Ovary (tissue), 10 donors: ENCODE measurements at regions of chr2 and their contacts with region 1.

Region 1: DNA sequence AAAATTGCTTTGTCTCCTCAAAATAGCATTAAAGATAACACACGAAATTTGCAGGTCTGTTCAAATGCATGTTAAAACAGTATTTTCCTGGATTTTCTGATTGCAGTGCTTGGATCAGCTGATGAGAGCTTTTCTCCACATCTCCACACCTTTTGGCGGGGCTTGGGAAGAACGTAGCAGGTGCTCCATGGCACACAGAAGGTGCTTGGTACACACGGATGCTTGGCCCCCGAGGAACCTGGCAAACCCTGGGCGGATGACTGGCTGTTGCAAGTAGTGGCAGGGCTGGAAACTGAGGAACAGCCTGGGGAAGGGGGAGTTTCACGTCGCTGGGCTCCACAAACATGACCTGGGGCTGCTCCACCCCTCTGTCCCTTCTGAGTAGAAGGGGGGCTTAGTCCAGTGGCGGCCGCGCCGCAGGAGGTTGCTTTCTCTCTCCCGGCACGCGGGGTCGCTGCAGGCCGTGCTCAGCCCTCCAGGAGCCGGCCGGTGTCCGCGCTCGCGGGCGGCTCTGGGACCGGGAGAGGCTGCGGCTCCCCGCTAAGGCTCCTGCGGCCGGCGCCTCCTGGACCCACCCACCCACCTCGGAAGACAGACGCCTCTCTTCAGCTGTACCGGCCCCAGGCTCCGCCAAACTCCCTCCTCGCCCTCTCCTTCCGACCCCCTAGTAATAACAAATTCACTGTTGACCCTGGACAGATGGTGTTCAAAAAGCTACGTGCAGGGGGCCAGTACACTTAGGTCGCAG is 69.3 kb downstream of the MARCO start:
- DNase-seq: peak in 4 of 5 donors; percentile 46 to 73 (median 58)
- H3K4me3 ChIP-seq: no peak overlapping the region
- H3K27ac ChIP-seq: no peak overlapping the region
- H3K4me1 ChIP-seq: no peaks in the 10 kb centered on the region
- H3K27me3 ChIP-seq: no peaks in the 10 kb centered on the region
- CTCF ChIP-seq: peak; percentile 20 to 64 (median 54)
- EP300 ChIP-seq: no peak
- POLR2A ChIP-seq: no peak

Region 2: GRCh38 chr2:119136093-119136492 is 124.8 kb after region 1 on chr2:
- intact Hi-C with region 1: no loop called
- DNase-seq: no peak
- H3K4me3 ChIP-seq: no peak overlapping the region
- H3K27ac ChIP-seq: no peak overlapping the region
- H3K4me1 ChIP-seq: no peaks in the 10 kb centered on the region
- H3K27me3 ChIP-seq: no peaks in the 10 kb centered on the region
- CTCF ChIP-seq: no peak
- EP300 ChIP-seq: no peak
- POLR2A ChIP-seq: no peak

Region 3: DNA sequence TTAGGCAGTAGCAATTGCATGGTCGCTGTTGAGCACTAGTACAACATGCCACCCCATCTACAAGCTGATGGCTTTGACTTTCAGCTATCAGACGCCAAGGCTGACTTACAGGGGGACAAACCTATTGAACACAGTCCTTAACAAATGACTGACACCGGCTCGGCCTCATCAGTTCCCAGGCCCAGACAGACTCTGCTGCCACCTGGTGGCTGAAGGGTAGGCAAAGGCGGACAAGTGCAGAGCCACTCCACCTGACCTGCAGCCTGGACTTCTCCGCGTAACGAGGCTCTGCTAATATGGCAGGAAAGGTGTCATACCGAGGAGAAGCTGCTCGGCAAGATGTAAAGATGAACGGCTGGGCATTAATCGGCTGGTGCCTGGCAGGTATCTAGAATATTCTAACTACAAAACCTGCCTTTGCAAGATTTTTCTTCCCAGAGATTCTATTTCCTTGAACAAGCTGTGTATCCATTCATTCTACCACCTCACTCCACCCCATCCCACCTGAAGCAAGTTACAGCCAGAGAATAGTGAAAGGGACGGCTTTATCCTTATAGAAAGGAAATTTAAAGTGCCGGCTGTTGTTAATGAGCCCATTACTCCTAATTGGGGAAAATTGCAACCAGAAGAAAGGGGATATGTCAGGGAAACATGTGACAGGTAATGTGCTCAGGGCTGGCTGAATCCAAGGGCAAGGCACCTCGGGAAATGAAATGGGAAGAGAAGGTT is 279.7 kb after region 1 on chr2:
- intact Hi-C with region 1: loop called in 2 of 4 experiments (anchors 2 to 5 kb)
- DNase-seq: peak in 4 of 5 donors; percentile 76 to 83 (median 79)
- H3K4me3 ChIP-seq: no peak overlapping the region
- H3K27ac ChIP-seq: no peak overlapping the region
- H3K4me1 ChIP-seq: no peaks in the 10 kb centered on the region
- H3K27me3 ChIP-seq: no peaks in the 10 kb centered on the region
- CTCF ChIP-seq: peak; percentile 44 to 68 (median 64)
- EP300 ChIP-seq: no peak
- POLR2A ChIP-seq: no peak

Region 4: GRCh38 chr2:119476301-119477021 is 465.1 kb after region 1 on chr2:
- intact Hi-C with region 1: loop called in 1 of 4 experiments (anchors 10 kb)
- DNase-seq: peak; percentile 54 to 78 (median 69)
- H3K4me3 ChIP-seq: no peak overlapping the region
- H3K27ac ChIP-seq: no peak overlapping the region
- H3K4me1 ChIP-seq: peaks cover 2% of the 10 kb centered on the region
- H3K27me3 ChIP-seq: no peaks in the 10 kb centered on the region
- CTCF ChIP-seq: peak; percentile 88 to 96 (median 91)
- EP300 ChIP-seq: no peak
- POLR2A ChIP-seq: no peak